ENCODE measurements at regions of chr11 and their contacts with region 1.

Region 1: DNA sequence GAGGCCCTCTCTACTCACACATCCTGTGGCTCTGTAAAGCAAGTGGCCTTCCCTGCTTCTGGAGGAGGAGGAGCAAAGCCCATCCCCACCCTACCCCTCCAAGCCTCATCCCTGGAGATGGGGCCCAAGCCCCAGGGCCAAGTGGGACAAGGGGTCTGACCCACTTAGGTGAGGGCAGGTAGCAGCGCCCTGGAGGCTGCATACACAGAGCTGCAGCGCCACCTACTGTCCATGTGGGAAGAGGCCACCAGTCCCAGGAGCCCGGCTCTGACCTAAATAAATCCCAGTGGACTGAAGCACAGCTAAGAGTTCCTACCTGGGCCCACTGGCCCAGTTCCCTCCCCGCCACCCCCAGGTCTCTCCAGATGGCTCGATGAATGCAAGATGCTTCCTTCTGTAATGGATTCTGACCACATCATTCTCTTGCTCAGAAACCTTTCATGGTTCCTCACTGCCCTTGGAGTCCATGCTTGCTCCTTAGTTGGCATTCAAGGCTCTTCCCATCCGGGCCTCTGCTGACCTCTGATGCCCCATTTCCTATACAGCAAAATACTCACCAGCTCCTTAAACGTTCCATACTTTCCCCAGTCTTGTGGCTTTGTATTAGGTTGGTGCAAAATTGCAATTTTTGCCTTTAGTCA is 62.1 kb downstream of the THAP12 start:
- DNase-seq: peak; percentile 80 to 92 (median 90)
- ATAC-seq: peak; percentile 86 to 91
- H3K4me3 ChIP-seq: no peak overlapping the region
- H3K27ac ChIP-seq: no peak overlapping the region
- H3K4me1 ChIP-seq: peaks cover 3% of the 10 kb centered on the region
- H3K27me3 ChIP-seq: no peaks in the 10 kb centered on the region

Region 2: DNA sequence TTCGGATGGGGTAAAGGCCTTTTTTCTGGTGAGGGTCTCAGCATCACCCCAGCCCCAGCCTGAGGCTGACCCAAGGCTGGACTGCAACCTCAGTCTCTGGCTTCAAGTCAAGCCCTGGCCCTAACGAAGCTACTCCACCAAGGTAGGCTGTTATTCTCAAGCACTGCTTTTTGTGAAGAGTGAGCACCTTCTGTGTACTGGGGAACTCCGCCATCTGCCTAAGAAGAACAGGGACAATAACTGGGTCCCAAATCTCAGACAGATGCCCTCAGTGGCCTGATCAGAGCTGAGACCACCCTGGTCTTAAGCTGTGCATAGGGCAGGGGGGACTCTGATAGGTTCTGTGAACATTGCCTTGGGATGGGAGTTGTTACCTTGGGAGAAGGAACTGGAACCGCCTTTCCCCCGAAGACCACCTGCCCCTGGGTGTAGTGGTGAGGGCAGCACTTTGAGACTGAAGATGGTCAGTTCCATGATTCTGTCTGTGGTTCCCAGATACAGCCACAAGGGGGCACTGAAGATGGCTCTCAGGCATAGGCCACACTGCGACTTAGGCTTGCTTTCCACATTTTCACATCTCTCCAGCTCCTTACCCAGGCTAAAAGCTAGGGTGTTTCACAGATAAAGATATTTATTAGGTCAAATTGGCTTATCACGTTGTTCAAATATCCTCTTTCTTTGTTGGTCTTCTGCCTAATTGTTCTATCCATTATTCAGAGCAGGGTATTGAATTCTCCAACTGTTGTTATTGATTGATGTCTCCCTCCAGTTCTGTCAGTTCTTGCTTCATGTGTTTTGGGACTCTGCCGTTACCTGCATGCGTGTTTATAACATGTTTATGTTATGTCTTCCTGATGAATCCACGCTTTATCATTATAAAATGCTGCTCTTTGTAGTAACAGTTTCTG is 515.7 kb before region 1 on chr11:
- intact Hi-C with region 1: loop called in 1 of 4 experiments (anchors 5 kb)
- DNase-seq: peak; percentile 69 to 83 (median 72)
- ATAC-seq: peak; percentile 82 to 86
- H3K4me3 ChIP-seq: no peak overlapping the region
- H3K27ac ChIP-seq: no peak overlapping the region
- H3K4me1 ChIP-seq: no peaks in the 10 kb centered on the region
- H3K27me3 ChIP-seq: no peaks in the 10 kb centered on the region

Region 3: DNA sequence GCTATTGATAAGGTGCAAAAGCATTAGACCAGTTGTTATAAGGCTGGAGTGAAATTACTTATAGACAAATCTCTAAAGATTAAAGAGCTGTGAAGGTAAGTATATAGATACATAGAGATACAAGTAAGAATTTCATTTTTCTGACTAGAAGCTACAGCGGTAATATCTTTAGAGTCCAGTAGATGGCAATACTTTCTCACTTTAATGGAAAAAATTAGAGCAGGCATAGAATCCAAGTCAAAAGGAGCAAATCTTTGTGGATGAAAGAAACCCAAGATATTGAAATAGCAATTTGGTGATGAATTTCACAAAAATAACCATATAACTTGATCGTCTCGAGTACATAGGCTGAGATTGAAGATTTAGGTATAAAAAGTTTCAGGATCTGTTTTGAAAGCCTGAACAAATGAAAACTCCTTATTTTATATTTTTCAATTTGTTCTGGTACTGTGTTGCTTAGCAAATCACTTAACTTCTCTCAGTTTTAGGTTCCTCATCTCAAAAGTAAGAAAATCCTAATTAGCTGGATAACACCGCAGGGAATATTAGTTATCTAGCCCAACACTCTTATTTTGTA is 421.9 kb before region 1 on chr11:
- intact Hi-C with region 1: loop called in 3 of 4 experiments (anchors 5 to 10 kb)
- DNase-seq: no peak
- ATAC-seq: peak in 1 of 2 donors; percentile 49
- H3K4me3 ChIP-seq: no peak overlapping the region
- H3K27ac ChIP-seq: no peak overlapping the region
- H3K4me1 ChIP-seq: no peaks in the 10 kb centered on the region
- H3K27me3 ChIP-seq: no peaks in the 10 kb centered on the region

Region 4: DNA sequence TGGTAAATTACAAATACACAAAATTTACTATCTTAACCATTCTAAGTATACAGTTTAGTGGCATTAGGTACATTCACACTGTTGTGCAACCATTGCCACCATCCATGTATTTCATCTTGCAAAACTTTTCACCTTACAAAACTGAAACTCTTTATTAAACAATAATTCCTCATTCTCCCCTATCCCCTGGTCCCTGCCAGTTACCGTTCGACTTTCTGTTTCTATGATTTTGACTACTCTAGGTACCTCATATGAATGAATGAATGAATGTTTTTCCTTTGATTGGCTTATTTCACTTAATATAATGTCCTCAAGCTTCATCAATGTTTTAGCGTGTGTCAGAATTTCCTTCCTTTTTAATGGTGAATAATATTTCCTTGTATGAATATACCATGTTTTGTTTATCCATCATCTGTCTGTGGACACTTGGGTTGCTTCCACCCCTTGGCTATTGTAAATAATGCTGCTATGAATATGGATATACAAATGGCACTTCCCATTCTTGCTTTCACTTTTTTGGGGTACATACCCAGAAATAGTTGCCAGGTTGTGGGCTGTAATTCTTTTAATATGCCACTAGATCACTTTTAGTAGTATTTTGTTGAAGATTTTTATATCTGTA is 410.8 kb before region 1 on chr11:
- intact Hi-C with region 1: loop called in 1 of 4 experiments (anchors 10 kb)
- DNase-seq: no peak
- ATAC-seq: no peak
- H3K4me3 ChIP-seq: no peak overlapping the region
- H3K27ac ChIP-seq: no peak overlapping the region
- H3K4me1 ChIP-seq: peaks cover 2% of the 10 kb centered on the region
- H3K27me3 ChIP-seq: no peaks in the 10 kb centered on the region

Region 5: GRCh38 chr11:76207642-76208401 is 111.0 kb before region 1 on chr11:
- intact Hi-C with region 1: loop called (anchors 2 to 5 kb)
- DNase-seq: peak; percentile 84 to 94 (median 93)
- ATAC-seq: peak; percentile 78 to 80
- H3K4me3 ChIP-seq: peak overlapping the region; percentile 50
- H3K27ac ChIP-seq: no peak overlapping the region
- H3K4me1 ChIP-seq: peaks cover 8% of the 10 kb centered on the region
- H3K27me3 ChIP-seq: no peaks in the 10 kb centered on the region